ENCODE measurements at regions of chr6 and their contacts with region 1.

Region 1: DNA sequence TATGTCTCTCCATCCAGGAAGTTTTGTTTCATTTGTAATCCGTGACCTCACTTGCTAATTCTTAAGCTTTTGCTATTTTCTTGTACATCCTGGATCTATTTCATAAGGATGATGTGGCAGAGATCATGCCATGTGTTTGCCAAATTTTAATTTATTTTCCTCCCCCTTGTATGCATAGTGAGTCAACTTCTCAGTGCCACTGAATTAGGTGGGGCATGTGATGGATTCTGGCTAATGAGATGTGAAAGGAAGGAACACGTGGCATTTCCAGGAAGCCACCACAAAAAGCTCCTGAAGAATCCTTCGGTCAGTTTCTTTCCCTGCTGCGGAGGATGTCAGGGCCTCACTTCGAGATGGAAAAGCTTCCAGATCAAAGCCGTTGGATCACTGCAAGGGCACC is 86.2 kb upstream of the PRL start:
- DNase-seq: no peak
- ATAC-seq: no peak
- H3K4me3 ChIP-seq: no peak overlapping the region
- H3K27ac ChIP-seq: no peak overlapping the region
- H3K4me1 ChIP-seq: no peaks in the 10 kb centered on the region
- H3K27me3 ChIP-seq: no peaks in the 10 kb centered on the region
- CTCF ChIP-seq: no peak

Region 2: DNA sequence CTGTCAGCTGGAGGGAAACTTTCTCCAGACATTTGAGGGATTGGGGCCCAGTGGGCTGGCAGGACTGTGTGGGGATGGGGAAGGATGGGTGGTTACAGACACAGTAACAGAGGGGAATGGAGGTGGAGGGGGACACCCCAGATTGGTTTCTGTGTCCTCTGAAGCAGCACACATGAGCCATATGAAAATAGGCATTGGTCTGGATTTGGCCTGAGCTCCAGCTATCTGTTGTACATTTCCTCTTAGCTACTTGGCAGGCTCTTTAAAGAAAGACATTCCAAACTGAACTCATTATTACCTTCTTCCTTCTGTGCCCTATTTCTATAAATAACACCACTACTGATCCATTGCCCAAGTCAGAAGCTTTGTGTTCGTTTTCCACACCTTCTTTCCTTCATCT is 14.2 kb before region 1 on chr6:
- CTCF ChIA-PET with region 1: interaction called, 11 read pairs
- POLR2A ChIA-PET with region 1: no interaction called
- in situ Hi-C with region 1: no loop called
- intact Hi-C with region 1: no loop called
- DNase-seq: no peak
- ATAC-seq: no peak
- H3K4me3 ChIP-seq: no peak overlapping the region
- H3K27ac ChIP-seq: no peak overlapping the region
- H3K4me1 ChIP-seq: peaks cover 3% of the 10 kb centered on the region
- H3K27me3 ChIP-seq: no peaks in the 10 kb centered on the region
- CTCF ChIP-seq: no peak